OCI-LY7 (cell line): ENCODE measurements at regions of chr1 and their contacts with region 1.

Region 1: DNA sequence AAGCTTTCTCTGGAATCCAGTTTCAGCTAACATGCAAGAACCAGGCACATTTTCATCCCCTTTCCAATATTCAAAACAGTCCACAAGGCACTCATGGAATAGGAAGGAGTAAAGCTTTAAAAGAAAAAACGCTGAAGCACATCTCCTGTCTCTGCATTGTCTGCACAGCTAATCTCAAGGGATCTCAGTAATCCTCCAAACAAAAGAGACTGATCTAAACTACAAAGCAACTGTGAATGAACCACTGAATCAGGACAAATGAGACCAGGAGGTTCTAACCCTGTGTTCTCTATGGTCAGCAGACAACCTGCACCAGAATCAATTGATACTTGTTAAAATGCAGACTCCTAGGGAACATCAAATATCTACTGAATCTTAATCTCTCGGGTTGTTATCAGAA is 399.0 kb downstream of the HHAT start:
- DNase-seq: no peak
- H3K4me3 ChIP-seq: no peak overlapping the region
- H3K27ac ChIP-seq: no peak overlapping the region
- H3K4me1 ChIP-seq: no peaks in the 10 kb centered on the region
- CTCF ChIP-seq: no peak

Region 2: DNA sequence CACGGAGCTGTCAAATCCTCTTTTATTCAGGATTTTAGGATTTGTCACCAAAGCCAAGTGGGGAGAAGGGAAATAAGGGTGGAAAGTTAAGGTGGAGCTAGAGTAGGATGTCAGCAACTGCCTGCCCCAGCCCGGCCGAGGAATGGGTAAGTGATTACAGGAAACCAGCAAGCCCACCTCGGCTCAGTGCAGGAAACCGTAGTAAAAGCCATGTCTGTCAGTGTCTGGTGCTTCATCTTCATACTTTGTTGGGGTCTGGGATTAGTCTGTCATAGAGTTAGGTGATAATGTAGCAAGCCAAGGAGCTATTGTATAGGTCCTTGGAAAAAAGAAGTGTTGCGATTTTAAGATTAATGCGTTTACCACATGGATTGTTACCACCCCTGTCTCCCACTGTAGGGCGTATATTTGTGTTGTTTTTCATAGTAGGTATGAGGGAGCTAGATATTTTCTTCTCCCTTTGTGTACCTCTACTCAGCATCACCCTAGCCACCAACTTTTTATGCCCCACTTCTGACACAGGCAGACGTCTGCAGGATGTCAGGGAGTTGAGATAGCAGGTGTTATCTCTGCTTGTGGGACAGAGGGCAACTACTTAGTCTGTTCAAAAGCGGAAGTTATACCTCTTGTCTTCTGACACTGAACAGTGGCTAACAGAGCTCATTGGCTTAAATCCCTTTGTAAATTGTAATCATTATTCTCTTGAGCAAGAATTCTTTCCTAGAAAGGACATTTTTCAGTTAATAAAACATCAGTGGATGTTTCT is 145.3 kb before region 1 on chr1:
- CTCF ChIA-PET with region 1: no interaction called
- POLR2A ChIA-PET with region 1: no interaction called
- intact Hi-C with region 1: no loop called
- DNase-seq: peak; percentile 22
- H3K4me3 ChIP-seq: no peak overlapping the region
- H3K27ac ChIP-seq: no peak overlapping the region
- H3K4me1 ChIP-seq: no peaks in the 10 kb centered on the region
- CTCF ChIP-seq: no peak

Region 3: GRCh38 chr1:210597555-210598134 is 130.1 kb before region 1 on chr1:
- CTCF ChIA-PET with region 1: interaction called, 11 read pairs
- POLR2A ChIA-PET with region 1: no interaction called
- intact Hi-C with region 1: no loop called
- DNase-seq: no peak
- H3K4me3 ChIP-seq: no peak overlapping the region
- H3K27ac ChIP-seq: no peak overlapping the region
- H3K4me1 ChIP-seq: no peaks in the 10 kb centered on the region
- CTCF ChIP-seq: no peak